ENCODE measurements at regions of chr13 and their contacts with region 1.

Region 1: GRCh38 chr13:98801626-98802418 is 49.4 kb upstream of the SLC15A1 start:
- DNase-seq: no peak
- ATAC-seq: peak in 5 of 8 donors; percentile 31 to 58 (median 50)
- H3K4me3 ChIP-seq: no peak overlapping the region
- H3K27ac ChIP-seq: peak overlapping the region in 2 of 10 donors; percentile 15 to 33
- H3K4me1 ChIP-seq: peaks cover 0 to 10% (median 0%) of the 10 kb centered on the region in 9 donors
- H3K27me3 ChIP-seq: no peaks in the 10 kb centered on the region
- CTCF ChIP-seq: no peak

Region 2: GRCh38 chr13:98869408-98870090 is 67.7 kb after region 1 on chr13:
- intact Hi-C with region 1: no loop called
- DNase-seq: peak; percentile 40 to 41
- ATAC-seq: peak in 7 of 8 donors; percentile 34 to 69 (median 55)
- H3K4me3 ChIP-seq: no peak overlapping the region
- H3K27ac ChIP-seq: peak overlapping the region in 1 of 10 donors; percentile 15
- H3K4me1 ChIP-seq: peaks cover 0 to 9% (median 0%) of the 10 kb centered on the region in 9 donors
- H3K27me3 ChIP-seq: no peaks in the 10 kb centered on the region
- CTCF ChIP-seq: peak in 2 of 9 donors; percentile 13 to 21

Region 3: DNA sequence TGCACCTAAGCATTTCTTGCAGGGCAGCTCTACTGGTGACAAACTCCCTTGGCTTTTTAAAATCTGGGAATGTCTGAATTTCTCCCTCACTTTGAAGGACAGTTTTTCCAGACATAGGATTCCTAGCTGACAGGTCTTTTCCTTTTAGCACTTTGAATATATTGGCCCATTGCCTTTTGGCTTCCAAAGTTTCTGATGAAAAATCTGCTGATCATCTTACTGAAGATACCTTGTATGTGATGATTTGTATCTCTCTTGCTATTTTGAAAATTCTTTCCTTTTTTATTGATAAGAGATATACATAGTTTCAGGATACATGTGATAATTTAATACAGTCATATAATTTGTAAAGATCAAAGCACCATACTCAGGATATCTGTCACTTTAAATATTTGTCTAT is 958.6 kb after region 1 on chr13:
- intact Hi-C with region 1: loop called in 1 of 10 experiments (anchors 5 kb)
- DNase-seq: no peak
- ATAC-seq: no peak
- H3K4me3 ChIP-seq: no peak overlapping the region
- H3K27ac ChIP-seq: no peak overlapping the region
- H3K4me1 ChIP-seq: no peaks in the 10 kb centered on the region
- H3K27me3 ChIP-seq: no peaks in the 10 kb centered on the region
- CTCF ChIP-seq: no peak

Measured in heart right ventricle (tissue), 16 donors.